GM10248 (cell line): ENCODE measurements at regions of chr1 and their contacts with region 1.

Region 1: GRCh38 chr1:156319664-156320063 is 18.4 kb downstream of the CCT3 start:
- DNase-seq: peak; percentile 35
- CTCF ChIP-seq: peak; percentile 35

Region 2: DNA sequence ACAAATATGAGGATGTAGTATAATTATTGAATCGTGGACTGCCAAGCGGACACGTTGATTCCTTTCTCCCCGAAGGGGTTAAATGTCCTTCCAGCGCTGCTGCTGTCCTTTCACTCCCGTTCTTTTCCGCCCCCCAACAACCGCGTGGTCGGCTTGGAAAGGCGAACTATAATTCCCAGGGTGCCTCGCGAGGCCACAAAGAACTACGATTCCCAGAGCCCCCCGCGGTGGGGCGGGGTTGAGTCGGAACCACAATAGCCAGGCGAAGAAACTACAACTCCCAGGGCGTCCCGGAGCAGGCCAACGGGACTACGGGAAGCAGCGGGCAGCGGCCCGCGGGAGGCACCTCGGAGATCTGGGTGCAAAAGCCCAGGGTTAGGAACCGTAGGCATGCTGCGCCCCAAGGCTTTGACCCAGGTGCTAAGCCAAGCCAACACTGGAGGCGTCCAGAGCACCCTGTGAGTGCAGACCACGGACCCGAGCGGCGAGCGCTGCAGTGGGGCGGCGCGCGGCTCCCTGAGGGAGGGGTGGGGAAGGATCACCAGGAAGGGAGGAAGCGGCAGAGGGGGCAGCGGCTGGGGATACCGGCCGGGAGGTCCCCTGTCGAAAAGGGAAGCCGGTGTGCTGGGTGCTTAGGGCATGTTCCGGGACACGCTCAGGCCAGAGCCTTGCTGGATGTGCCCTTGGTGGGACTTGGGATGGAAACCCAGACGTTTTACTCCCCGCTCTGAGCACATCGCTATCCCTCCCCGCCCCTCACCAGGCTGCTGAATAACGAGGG is 265.0 kb before region 1 on chr1 and contains the start of gene LAMTOR2:
- CTCF ChIA-PET with region 1: no interaction called
- POLR2A ChIA-PET with region 1: no interaction called
- DNase-seq: peak; percentile 94
- CTCF ChIP-seq: no peak

Region 3: DNA sequence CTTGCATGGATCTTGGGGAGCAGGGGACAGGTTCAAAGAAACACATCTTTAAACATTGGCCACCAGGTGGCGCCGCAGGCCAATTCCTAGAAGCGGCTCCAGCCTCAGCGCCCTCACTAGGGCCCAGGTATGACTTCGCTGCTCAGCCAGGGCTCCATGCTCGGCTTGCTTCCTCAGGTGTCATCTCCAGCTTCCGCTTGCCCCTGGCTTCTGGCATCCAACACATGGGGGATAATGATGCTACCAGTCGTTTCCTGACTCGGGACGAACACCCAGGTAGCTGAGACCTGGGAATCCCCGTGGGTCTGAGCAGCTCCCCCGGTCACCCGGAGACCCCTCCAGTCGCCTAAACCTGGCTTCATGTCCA is 228.9 kb before region 1 on chr1:
- CTCF ChIA-PET with region 1: interaction called, 19 read pairs
- POLR2A ChIA-PET with region 1: no interaction called
- DNase-seq: peak; percentile 86
- CTCF ChIP-seq: peak; percentile 71

Region 4: GRCh38 chr1:156146020-156146768 is 173.5 kb before region 1 on chr1:
- CTCF ChIA-PET with region 1: interaction called, 26 read pairs
- POLR2A ChIA-PET with region 1: no interaction called
- DNase-seq: peak; percentile 81
- CTCF ChIP-seq: peak; percentile 69

Region 5: GRCh38 chr1:156282479-156283222 is 37.0 kb before region 1 on chr1 and contains the start of gene SMG5:
- CTCF ChIA-PET with region 1: interaction called, 14 read pairs
- POLR2A ChIA-PET with region 1: no interaction called
- DNase-seq: peak; percentile 95
- CTCF ChIP-seq: no peak

Region 6: GRCh38 chr1:156308078-156308477 is 11.6 kb before region 1 on chr1:
- CTCF ChIA-PET with region 1: interaction called, 21 read pairs
- POLR2A ChIA-PET with region 1: no interaction called
- DNase-seq: no peak
- CTCF ChIP-seq: no peak

Region 7: GRCh38 chr1:156338180-156338973 is 18.7 kb after region 1 on chr1 and contains the starts of genes CCT3 and TSACC:
- CTCF ChIA-PET with region 1: interaction called, 11 read pairs
- POLR2A ChIA-PET with region 1: no interaction called
- DNase-seq: peak; percentile 98
- CTCF ChIP-seq: no peak

Region 8: GRCh38 chr1:156618853-156619581 is 299.4 kb after region 1 on chr1 and contains the start of gene HAPLN2:
- CTCF ChIA-PET with region 1: no interaction called
- POLR2A ChIA-PET with region 1: no interaction called
- DNase-seq: peak; percentile 27
- CTCF ChIP-seq: peak; percentile 45